ENCODE measurements at regions of chr11 and their contacts with region 1.

Region 1: DNA sequence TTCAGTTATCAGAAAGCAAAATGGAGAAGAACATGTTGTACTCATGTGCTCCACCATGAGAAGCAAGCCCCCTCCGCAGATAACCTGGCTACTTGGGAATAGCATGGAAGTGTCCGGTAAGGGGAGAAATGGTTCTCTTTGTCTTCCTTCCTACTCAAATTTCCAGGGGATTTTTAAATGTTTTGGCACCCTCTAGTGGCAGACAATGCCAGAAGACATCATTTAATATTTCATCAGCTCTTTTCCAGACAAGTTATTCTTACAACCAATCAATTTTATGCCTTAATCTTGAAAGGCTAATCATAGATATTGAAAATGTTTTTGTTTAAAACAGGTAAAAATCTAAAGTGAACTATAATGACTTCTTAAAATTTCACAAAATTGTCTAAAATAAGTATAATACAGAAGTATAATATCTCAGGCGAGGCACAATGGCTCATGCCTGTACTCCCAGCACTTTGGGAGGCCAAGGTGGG is 15.7 kb downstream of the CRTAM start:
- DNase-seq: peak; percentile 59
- H3K4me3 Mint-ChIP-seq: no peak overlapping the region
- H3K27ac Mint-ChIP-seq: no peak overlapping the region
- H3K4me1 Mint-ChIP-seq: peaks cover 31% of the 10 kb centered on the region
- H3K27me3 Mint-ChIP-seq: peaks cover 11% of the 10 kb centered on the region

Region 2: DNA sequence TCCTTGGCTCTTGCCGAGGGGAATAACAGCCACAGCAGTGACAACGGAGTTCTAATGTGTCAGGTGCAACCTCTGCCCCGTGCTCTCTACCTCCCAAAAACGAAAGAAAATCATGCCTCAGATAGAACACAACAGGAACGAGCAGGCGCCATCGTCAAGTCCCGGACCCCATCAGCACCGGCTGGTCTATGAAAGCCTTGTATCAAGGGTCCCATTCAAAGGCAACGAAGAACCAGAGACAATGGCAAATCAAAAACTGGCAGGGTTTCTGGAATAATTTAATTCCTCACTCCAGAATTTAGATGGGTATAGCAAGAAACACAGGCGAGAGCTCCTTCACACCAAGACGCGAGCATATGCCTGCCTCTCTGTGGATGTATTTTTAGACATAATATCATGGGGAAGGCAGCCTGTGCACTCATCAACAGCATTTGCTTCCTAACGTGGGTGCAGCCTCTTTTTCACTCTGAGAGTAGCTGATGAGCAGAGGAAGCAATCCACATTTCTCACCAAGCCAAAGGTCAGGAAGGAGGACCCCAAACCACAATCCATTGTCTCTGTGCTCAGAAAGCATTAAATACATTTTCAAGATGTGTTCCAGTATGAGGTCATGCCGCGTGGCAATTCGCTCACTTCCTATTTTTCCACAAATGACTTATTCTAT is 544.6 kb before region 1 on chr11:
- CTCF ChIA-PET with region 1: no interaction called
- DNase-seq: no peak
- H3K4me3 Mint-ChIP-seq: no peak overlapping the region
- H3K27ac Mint-ChIP-seq: no peak overlapping the region
- H3K4me1 Mint-ChIP-seq: no peaks in the 10 kb centered on the region
- H3K27me3 Mint-ChIP-seq: no peaks in the 10 kb centered on the region

Region 3: DNA sequence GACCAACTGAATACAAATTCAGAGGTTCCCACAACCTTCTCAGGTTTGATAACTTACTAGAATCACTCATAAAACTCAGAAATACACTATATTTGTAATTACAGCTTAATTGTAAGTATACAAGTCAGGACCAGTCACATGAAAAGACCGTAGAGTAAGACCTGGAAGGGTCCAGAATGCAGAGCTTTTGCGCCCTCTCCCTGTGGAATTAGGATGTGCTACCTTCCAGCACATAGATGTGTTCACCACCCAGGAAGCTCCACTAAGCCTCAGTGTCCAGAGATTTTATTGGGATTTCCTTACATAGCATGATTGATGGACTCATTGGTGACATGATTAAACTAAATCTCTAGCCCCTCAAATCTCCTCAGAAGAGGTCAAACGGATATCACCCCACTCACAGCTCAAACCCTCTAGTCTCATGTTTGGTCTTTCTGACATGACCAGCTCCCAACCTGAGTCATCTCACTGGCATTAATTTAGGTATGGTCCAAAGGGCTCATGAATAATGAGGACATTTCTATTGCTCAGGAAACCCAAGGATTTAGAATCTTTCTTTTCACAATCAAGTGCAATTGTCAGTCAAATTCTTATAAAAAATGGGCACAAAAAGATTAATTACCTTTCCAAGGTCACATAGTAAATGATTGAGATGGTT is 275.7 kb before region 1 on chr11:
- CTCF ChIA-PET with region 1: interaction called, 24 read pairs
- DNase-seq: no peak
- H3K4me3 Mint-ChIP-seq: no peak overlapping the region
- H3K27ac Mint-ChIP-seq: no peak overlapping the region
- H3K4me1 Mint-ChIP-seq: peaks cover 9% of the 10 kb centered on the region
- H3K27me3 Mint-ChIP-seq: no peaks in the 10 kb centered on the region

Region 4: GRCh38 chr11:122781378-122782195 is 72.4 kb before region 1 on chr11:
- CTCF ChIA-PET with region 1: interaction called, 24 read pairs
- DNase-seq: peak; percentile 80
- H3K4me3 Mint-ChIP-seq: no peak overlapping the region
- H3K27ac Mint-ChIP-seq: no peak overlapping the region
- H3K4me1 Mint-ChIP-seq: peaks cover 3% of the 10 kb centered on the region
- H3K27me3 Mint-ChIP-seq: no peaks in the 10 kb centered on the region

Region 5: DNA sequence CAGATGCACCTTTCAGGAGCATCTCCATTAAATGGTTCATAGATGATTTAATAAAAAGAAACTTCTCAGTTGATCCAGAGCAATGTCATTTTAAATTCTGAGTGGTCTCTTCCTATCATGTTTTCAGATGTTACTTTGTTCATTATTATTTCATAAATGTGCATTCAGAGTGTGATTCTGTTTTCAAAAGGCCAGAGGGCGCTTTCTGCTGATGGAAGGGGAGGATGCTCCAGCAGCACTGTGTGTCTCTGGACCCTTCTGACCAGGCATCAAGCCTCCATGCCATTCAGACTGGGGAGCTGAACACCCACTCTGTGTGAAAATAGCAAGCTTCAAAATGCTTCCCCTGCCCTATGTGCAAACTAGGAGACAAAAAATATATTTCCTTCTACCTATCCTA is 39.6 kb before region 1 on chr11:
- CTCF ChIA-PET with region 1: interaction called, 50 read pairs
- DNase-seq: no peak
- H3K4me3 Mint-ChIP-seq: no peak overlapping the region
- H3K27ac Mint-ChIP-seq: no peak overlapping the region
- H3K4me1 Mint-ChIP-seq: peaks cover 10% of the 10 kb centered on the region
- H3K27me3 Mint-ChIP-seq: no peaks in the 10 kb centered on the region

Region 6: GRCh38 chr11:122843281-122844141 is 10.5 kb before region 1 on chr11:
- CTCF ChIA-PET with region 1: interaction called, 10 read pairs
- DNase-seq: peak; percentile 60
- H3K4me3 Mint-ChIP-seq: peak overlapping the region; percentile 11
- H3K27ac Mint-ChIP-seq: peak overlapping the region; percentile 89
- H3K4me1 Mint-ChIP-seq: peaks cover 36% of the 10 kb centered on the region
- H3K27me3 Mint-ChIP-seq: no peaks in the 10 kb centered on the region

Region 7: DNA sequence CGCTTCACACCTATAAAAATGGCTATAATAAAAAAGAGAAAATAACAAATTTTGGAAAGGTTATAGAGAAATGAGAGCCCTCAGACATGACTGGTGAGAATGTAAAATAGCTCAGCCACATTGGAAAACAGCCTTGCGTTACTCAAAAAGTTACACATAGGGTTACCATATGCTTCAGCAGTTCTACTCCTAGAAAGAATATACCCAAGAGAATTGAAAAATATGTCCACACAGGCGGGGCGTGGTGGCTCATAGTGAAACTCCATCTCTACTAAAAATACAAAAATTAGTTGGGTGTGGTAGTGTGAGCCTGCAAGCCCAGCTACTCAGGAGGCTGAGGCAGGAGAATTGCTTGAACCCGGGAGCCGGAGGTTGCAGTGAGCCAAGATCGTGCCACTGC is 21.0 kb after region 1 on chr11:
- CTCF ChIA-PET with region 1: no interaction called
- DNase-seq: no peak
- H3K4me3 Mint-ChIP-seq: no peak overlapping the region
- H3K27ac Mint-ChIP-seq: no peak overlapping the region
- H3K4me1 Mint-ChIP-seq: no peaks in the 10 kb centered on the region
- H3K27me3 Mint-ChIP-seq: peaks cover 9% of the 10 kb centered on the region

Region 8: GRCh38 chr11:122893131-122893530 is 39.1 kb after region 1 on chr11:
- CTCF ChIA-PET with region 1: no interaction called
- DNase-seq: no peak
- H3K4me3 Mint-ChIP-seq: no peak overlapping the region
- H3K27ac Mint-ChIP-seq: no peak overlapping the region
- H3K4me1 Mint-ChIP-seq: no peaks in the 10 kb centered on the region
- H3K27me3 Mint-ChIP-seq: no peaks in the 10 kb centered on the region

Measured in activated naive CD4-positive, alpha-beta T cell treated with anti-CD3 and anti-CD28 coated beads, Interleukin-2, amount 10 ng/mL, durations not matched to agents 7 days and 5 days (primary cell).